Activated CD4-positive, alpha-beta T cell treated with anti-CD3 and anti-CD28 coated beads for 36 hours (primary cell): ENCODE measurements at regions of chr19 and their contacts with region 1.

Region 1: DNA sequence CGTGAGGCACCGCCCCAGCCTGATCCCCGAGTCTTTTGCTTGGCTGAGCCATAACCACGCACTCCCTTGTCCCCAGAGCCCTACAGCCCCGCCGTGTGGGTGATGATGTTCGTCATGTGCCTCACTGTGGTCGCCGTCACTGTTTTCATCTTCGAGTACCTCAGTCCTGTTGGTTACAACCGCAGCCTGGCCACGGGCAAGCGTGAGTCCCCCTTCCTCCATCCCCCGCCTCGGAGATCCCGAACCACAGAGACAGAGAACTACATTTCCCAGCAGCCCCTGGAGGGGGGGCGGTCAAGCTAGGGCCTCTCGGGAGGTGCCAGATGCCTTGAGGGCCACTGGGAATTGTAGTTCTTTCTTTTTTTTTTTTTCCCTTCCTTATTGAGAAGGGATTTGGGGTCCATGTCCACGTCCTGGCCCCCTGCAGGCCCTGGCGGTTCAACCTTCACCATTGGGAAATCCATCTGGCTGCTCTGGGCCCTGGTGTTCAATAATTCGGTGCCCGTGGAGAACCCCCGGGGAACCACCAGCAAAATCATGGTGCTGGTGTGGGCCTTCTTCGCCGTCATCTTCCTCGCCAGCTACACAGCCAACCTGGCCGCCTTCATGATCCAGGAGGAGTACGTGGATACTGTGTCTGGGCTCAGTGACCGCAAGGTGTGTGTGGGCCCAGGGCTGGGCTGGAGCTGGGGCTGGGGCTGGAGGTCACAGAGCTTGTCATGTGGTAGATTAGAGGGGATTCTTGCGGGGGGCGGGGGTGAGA is 25.9 kb downstream of the GRIN2D start:
- DNase-seq: peak; percentile 87
- ATAC-seq: peak; percentile 81
- H3K4me3 Mint-ChIP-seq: peak overlapping the region; percentile 29
- H3K27ac Mint-ChIP-seq: peak overlapping the region; percentile 83
- H3K4me1 Mint-ChIP-seq: peaks cover 21% of the 10 kb centered on the region
- H3K27me3 Mint-ChIP-seq: peaks cover 15% of the 10 kb centered on the region

Region 2: DNA sequence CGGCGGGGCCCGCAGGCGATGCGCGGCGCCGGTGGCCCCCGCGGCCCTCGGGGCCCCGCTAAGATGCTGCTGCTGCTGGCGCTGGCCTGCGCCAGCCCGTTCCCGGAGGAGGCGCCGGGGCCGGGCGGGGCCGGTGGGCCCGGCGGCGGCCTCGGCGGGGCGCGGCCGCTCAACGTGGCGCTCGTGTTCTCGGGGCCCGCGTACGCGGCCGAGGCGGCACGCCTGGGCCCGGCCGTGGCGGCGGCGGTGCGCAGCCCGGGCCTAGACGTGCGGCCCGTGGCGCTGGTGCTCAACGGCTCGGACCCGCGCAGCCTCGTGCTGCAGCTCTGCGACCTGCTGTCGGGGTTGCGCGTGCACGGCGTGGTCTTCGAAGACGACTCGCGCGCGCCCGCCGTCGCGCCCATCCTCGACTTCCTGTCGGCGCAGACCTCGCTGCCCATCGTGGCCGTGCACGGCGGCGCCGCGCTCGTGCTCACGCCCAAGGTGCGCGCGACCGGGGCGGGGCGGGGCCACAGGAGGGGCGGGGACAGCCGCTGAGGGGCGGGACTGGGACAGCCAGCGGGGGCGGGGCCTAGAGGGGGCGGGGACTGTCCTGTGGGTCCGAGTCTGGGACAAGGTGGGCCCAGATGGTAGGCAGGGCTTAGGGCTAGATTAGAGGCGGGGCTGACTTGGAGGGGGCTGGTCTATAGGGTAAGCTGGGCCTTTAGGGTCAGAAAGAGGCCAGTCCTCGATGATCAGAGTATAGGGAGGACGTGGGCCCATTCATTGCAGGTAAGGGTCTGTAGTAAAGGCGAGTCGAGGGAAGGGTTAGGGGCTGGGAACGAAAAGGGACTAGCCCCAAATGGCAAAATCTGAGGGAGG is 20.7 kb before region 1 on chr19:
- CTCF ChIA-PET with region 1: interaction called, 3 read pairs
- POLR2A ChIA-PET with region 1: no interaction called
- intact Hi-C with region 1: loop called in 1 of 2 experiments (anchors 1 kb)
- DNase-seq: peak; percentile 94
- ATAC-seq: peak; percentile 68
- H3K4me3 Mint-ChIP-seq: peak overlapping the region; percentile 83
- H3K27ac Mint-ChIP-seq: no peak overlapping the region
- H3K4me1 Mint-ChIP-seq: peaks cover 29% of the 10 kb centered on the region
- H3K27me3 Mint-ChIP-seq: peaks cover 31% of the 10 kb centered on the region